Activated CD4-positive, alpha-beta memory T cell treated with anti-CD3 and anti-CD28 coated beads, Interleukin-2, amount 10 ng/mL, durations not matched to agents 7 days and 5 days (primary cell): ENCODE measurements at regions of chr17 and their contacts with region 1.

Region 1: DNA sequence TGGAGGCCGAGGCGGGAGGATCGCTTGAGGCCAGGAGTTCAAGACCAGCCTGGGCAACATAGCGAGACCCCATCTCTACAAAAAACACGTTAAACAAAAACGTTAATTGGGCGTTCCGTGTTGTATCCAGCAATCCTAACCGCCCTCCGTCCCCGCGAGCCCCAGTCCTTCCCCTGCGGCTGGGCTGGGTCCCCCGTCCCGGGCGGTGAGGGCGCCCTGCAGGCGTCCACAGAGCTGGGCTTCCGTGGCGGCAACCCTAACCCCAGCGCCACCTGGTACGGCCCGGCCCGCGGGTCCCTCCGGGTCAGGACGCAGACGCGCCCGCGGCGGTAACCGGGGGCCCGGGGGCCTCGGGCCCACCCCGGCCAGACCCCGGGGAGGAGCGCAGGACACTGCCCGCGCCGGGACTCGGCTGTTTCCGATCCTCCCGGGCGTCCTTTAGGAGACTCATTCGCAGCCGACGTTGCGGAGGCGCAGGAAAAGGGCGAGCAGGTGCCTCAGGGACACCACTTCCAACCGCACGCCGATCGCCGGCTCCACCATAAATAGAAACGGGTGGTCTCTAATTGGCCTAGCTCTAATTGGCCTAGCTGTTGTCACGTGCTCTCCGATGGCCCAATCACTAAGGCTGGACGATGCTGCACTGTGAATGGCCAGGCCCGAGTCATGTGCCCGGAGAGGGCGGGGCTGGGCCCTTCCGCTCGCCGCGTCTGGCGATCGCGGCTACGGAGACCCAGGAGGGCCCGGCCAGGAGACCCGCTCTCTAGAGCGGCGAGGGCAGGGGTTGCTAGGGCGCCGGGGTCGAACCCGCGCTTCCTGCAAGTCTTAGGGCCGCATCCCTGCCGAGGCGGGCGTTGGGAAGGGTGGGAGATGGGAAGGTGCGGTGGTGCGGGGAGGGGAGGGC is 19.0 kb upstream of the CSNK1D start:
- DNase-seq: peak; percentile 95
- H3K4me3 Mint-ChIP-seq: peak overlapping the region; percentile 88
- H3K27ac Mint-ChIP-seq: peak overlapping the region; percentile 86
- H3K4me1 Mint-ChIP-seq: peaks cover 51% of the 10 kb centered on the region
- H3K27me3 Mint-ChIP-seq: no peaks in the 10 kb centered on the region

Region 2: GRCh38 chr17:82230627-82231311 is 61.7 kb before region 1 on chr17:
- CTCF ChIA-PET with region 1: interaction called, 12 read pairs
- POLR2A ChIA-PET with region 1: interaction called, 18 read pairs
- DNase-seq: peak; percentile 76
- H3K4me3 Mint-ChIP-seq: peak overlapping the region; percentile 91
- H3K27ac Mint-ChIP-seq: no peak overlapping the region
- H3K4me1 Mint-ChIP-seq: peaks cover 32% of the 10 kb centered on the region
- H3K27me3 Mint-ChIP-seq: no peaks in the 10 kb centered on the region

Region 3: GRCh38 chr17:82236142-82236981 is 56.1 kb before region 1 on chr17:
- CTCF ChIA-PET with region 1: interaction called, 12 read pairs
- POLR2A ChIA-PET with region 1: interaction called, 19 read pairs
- DNase-seq: peak; percentile 75
- H3K4me3 Mint-ChIP-seq: no peak overlapping the region
- H3K27ac Mint-ChIP-seq: peak overlapping the region; percentile 44
- H3K4me1 Mint-ChIP-seq: peaks cover 63% of the 10 kb centered on the region
- H3K27me3 Mint-ChIP-seq: no peaks in the 10 kb centered on the region

Region 4: GRCh38 chr17:82273327-82274133 is 19.0 kb before region 1 on chr17 and contains the start of gene CSNK1D:
- CTCF ChIA-PET with region 1: interaction called, 4 read pairs
- POLR2A ChIA-PET with region 1: interaction called, 49 read pairs
- DNase-seq: peak; percentile 94
- H3K4me3 Mint-ChIP-seq: peak within 1 kb of the TSS; percentile 97
- H3K27ac Mint-ChIP-seq: peak within 1 kb of the TSS; percentile 93
- H3K4me1 Mint-ChIP-seq: peaks cover 41% of the 10 kb centered on the region
- H3K27me3 Mint-ChIP-seq: peaks cover 2% of the 10 kb centered on the region
- total RNA-seq, gene CSNK1D: 116 TPM

Region 5: GRCh38 chr17:82315703-82316358 is 23.3 kb after region 1 on chr17:
- CTCF ChIA-PET with region 1: interaction called, 12 read pairs
- POLR2A ChIA-PET with region 1: interaction called, 120 read pairs
- DNase-seq: peak; percentile 50
- H3K4me3 Mint-ChIP-seq: peak overlapping the region; percentile 83
- H3K27ac Mint-ChIP-seq: peak overlapping the region; percentile 56
- H3K4me1 Mint-ChIP-seq: peaks cover 20% of the 10 kb centered on the region
- H3K27me3 Mint-ChIP-seq: peaks cover 4% of the 10 kb centered on the region